B cell (primary cell): ENCODE measurements at regions of chr3 and their contacts with region 1.

Region 1: DNA sequence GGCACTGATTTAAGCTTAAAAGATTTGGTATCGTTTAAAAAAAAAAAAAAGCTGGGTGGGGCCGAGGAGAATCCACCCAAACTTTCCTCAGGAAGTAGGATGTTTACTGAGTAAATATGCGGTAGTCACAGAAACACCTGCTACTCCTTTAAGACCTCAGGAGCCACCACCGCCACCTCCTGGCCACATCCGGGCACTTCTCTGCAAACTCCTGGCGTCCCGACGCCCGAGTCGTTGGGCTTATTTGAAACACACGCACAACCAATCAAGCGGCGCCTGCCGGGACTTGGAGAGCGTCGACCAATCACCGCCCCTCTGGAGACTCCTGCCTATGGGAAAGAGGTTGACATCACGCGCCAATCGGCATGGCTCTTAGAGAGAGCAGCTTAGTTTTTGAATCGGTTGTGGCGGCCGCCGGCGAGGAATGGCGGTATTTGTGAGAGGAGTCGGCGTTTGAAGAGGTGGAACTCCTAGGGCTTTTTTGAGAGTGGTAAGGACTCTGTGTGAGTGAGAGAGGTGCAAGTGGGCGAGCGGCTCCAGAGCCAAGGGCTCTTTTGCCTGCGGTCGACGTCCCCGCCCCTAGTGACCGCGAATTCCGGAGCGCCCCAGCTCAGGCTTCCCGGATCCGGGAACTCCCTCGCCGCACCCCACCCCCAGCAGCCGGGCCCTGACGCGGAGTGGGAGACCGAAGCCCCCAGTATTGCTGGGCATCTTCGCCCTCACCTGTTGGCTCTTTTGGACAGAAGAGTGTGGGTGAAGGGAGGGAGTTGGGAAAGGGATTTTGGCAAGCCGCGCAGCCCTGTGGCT is at the start of gene ECT2:
- DNase-seq: peak; percentile 99
- ATAC-seq: peak; percentile 98
- H3K4me3 ChIP-seq: peak within 1 kb of the TSS; percentile 71 to 86 (median 82)
- H3K4me3 Mint-ChIP-seq: peak within 1 kb of the TSS; percentile 93
- H3K27ac ChIP-seq: peak within 1 kb of the TSS; percentile 78 to 86
- H3K27ac Mint-ChIP-seq: peak within 1 kb of the TSS; percentile 80
- H3K4me1 ChIP-seq: peaks cover 7 to 13% of the 10 kb centered on the region in 2 donors
- H3K4me1 Mint-ChIP-seq: peaks cover 10% of the 10 kb centered on the region
- H3K27me3 ChIP-seq: no peaks in the 10 kb centered on the region
- H3K27me3 Mint-ChIP-seq: no peaks in the 10 kb centered on the region
- CTCF ChIP-seq: peak; percentile 78
- total RNA-seq, gene ECT2: 5.1 and 5.7 TPM in 2 replicates

Region 2: DNA sequence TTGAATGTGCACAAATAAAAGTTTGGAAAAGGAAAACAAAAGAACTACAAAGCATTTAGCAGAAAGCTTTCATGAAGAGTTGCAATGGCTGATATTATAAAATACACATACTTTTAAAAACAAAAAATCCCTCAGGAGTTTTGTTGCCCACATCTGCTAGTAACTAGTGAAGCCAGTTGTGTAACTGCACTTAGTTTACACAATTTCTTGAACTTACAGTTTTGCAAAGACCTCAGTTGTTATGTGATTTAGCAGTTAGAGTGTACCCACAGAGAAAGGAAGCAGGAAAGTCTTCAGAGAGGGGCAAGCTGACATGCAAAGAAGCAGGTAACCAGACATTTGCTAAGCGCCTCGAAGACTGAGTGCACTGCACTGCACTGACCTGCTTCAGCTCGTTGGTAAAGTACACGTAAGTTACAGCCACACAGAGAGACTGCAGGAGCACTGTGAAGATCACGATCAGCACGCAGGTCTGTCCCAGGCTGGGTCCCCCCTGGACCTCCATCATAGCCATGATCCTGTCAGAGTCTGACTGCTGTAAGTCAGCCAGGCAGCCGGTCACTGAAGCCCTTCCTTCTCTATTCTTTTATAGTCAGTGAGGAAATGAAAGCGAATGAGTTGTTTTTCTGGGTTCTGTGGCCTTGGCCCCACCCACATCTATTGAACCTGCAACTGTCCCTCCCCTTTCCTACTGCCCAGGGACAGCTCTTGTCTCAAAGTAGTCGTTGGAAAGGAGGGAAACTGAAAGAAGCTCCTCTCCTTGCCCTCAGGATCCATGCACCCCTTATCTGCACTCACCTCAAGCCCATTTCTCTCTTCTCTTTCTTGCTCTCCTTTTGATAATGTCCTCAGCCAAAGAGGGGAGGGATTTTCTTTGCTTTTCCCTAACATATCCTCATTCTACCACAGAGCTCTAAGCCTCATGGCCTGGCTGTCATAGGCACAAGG is 227.4 kb before region 1 on chr3 and contains the start of gene TNFSF10:
- CTCF ChIA-PET with region 1: interaction called, 4 read pairs
- POLR2A ChIA-PET with region 1: no interaction called
- intact Hi-C with region 1: loop called (anchors 2 kb)
- DNase-seq: peak; percentile 73
- ATAC-seq: peak; percentile 96
- H3K4me3 ChIP-seq: peak within 1 kb of the TSS; percentile 60 to 96 (median 81)
- H3K4me3 Mint-ChIP-seq: peak within 1 kb of the TSS; percentile 98
- H3K27ac ChIP-seq: peak within 1 kb of the TSS; percentile 67 to 84
- H3K27ac Mint-ChIP-seq: peak within 1 kb of the TSS; percentile 96
- H3K4me1 ChIP-seq: peaks cover 27 to 30% of the 10 kb centered on the region in 2 donors
- H3K4me1 Mint-ChIP-seq: peaks cover 51% of the 10 kb centered on the region
- H3K27me3 ChIP-seq: no peaks in the 10 kb centered on the region
- H3K27me3 Mint-ChIP-seq: no peaks in the 10 kb centered on the region
- CTCF ChIP-seq: no peak
- total RNA-seq, gene TNFSF10: 16.4 and 17.8 TPM in 2 replicates

Region 3: GRCh38 chr3:172616031-172616461 is 134.5 kb before region 1 on chr3:
- CTCF ChIA-PET with region 1: no interaction called
- POLR2A ChIA-PET with region 1: no interaction called
- intact Hi-C with region 1: no loop called
- DNase-seq: no peak
- ATAC-seq: no peak
- H3K4me3 ChIP-seq: no peak overlapping the region
- H3K4me3 Mint-ChIP-seq: no peak overlapping the region
- H3K27ac ChIP-seq: no peak overlapping the region
- H3K27ac Mint-ChIP-seq: no peak overlapping the region
- H3K4me1 ChIP-seq: no peaks in the 10 kb centered on the region
- H3K4me1 Mint-ChIP-seq: peaks cover 9% of the 10 kb centered on the region
- H3K27me3 ChIP-seq: no peaks in the 10 kb centered on the region
- H3K27me3 Mint-ChIP-seq: no peaks in the 10 kb centered on the region
- CTCF ChIP-seq: no peak

Region 4: DNA sequence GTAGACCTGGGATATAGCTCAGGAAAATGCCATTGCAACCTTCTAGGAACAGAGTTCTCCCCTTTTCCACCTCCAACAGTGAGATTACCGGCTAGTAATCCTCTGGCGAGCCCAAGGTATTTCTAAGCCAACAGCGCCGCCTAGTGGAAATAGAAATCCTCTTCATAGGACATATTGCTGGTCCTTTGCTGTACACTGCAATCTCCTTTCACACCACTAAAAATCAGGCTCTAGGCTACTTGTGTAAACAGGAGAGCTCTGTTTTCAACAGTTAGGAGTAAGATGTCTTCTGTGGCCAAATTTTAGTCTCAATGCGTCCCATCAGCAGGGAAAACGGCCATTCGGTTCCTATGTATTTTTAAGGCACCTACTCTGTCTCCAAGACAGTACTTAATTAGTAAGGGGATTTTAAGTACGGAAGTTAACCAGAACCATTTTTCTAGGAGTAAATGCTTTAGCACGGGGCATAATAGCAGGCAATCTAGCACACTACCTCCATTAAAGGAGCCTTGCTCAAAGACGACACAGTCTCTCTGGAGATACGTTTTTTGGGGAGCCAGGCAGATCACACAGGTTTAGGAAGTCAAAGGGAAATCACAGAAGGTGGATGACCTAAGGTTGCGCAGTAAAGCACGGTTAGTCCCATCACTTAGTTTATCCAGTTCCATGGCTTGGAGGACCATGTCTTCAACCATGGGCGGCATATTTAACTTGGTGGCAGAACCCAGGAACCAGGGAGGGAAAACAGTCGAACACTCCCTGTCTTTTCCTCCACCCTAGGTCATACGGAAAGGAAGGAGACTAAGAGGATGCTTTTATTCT is 83.5 kb before region 1 on chr3:
- CTCF ChIA-PET with region 1: interaction called, 7 read pairs
- POLR2A ChIA-PET with region 1: no interaction called
- intact Hi-C with region 1: loop called (anchors 2 kb)
- DNase-seq: peak; percentile 70
- ATAC-seq: peak; percentile 76
- H3K4me3 ChIP-seq: no peak overlapping the region
- H3K4me3 Mint-ChIP-seq: no peak overlapping the region
- H3K27ac ChIP-seq: no peak overlapping the region
- H3K27ac Mint-ChIP-seq: no peak overlapping the region
- H3K4me1 ChIP-seq: peaks cover 0 to 4% of the 10 kb centered on the region in 2 donors
- H3K4me1 Mint-ChIP-seq: peaks cover 10% of the 10 kb centered on the region
- H3K27me3 ChIP-seq: no peaks in the 10 kb centered on the region
- H3K27me3 Mint-ChIP-seq: no peaks in the 10 kb centered on the region
- CTCF ChIP-seq: peak; percentile 77

Region 5: DNA sequence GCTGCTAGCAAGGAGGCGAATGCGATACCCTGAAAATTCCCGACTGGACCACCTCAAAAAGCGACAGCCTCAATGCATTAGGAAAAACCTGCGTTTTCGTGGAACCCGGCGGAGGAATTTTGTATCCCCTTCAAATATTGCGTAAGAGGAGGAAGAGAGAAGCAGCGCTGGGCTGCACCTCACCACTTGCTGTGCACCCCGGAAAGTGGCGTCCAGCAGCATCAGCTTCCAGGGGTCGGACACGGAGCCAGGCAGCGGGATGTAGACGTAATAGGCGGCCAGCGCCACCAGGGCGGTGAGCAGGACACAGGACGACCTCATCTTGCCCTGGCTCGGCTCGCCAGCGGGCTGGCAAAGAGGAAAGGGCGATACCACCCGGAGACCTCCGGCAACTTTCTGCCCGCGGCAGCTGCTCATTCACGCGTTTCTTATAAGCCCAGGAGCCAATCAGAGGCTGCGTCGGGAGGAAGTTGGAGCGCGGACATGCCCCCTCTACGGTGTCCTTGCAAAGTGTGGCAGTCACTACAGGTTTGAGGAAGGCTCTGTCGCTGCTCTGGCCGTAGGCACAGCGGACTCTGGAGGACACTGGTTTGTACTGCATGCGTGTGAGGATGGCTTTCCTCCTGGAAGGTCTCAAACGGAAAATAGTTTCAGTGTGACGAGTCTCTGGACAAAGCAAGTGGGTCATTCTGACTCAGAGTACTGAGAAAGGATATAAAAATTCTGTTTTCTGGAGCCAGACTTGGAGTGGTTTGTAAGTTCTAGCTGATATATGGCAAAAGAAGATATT is 39.7 kb before region 1 on chr3 and contains the start of gene NCEH1:
- CTCF ChIA-PET with region 1: interaction called, 17 read pairs
- POLR2A ChIA-PET with region 1: interaction called, 8 read pairs
- intact Hi-C with region 1: loop called (anchors 1 kb)
- DNase-seq: peak; percentile 87
- ATAC-seq: peak; percentile 99
- H3K4me3 ChIP-seq: peak within 1 kb of the TSS; percentile 86 to 98 (median 94)
- H3K4me3 Mint-ChIP-seq: peak within 1 kb of the TSS; percentile 98
- H3K27ac ChIP-seq: peak within 1 kb of the TSS; percentile 28 to 38
- H3K27ac Mint-ChIP-seq: peak within 1 kb of the TSS; percentile 89
- H3K4me1 ChIP-seq: peaks cover 15 to 23% of the 10 kb centered on the region in 2 donors
- H3K4me1 Mint-ChIP-seq: peaks cover 30% of the 10 kb centered on the region
- H3K27me3 ChIP-seq: peaks cover 0 to 4% (median 0%) of the 10 kb centered on the region in 4 experiments
- H3K27me3 Mint-ChIP-seq: no peaks in the 10 kb centered on the region
- CTCF ChIP-seq: peak; percentile 79
- total RNA-seq, gene NCEH1: 7.7 and 8.6 TPM in 2 replicates